ENCODE measurements at regions of chr15 and their contacts with region 1.

Region 1: GRCh38 chr15:73069109-73069508 is 16.8 kb downstream of the NEO1 start:
- DNase-seq: no peak
- H3K4me3 ChIP-seq: no peak overlapping the region
- H3K4me3 Mint-ChIP-seq: no peak overlapping the region
- H3K27ac ChIP-seq: no peak overlapping the region
- H3K27ac Mint-ChIP-seq: no peak overlapping the region
- H3K4me1 ChIP-seq: no peaks in the 10 kb centered on the region
- H3K4me1 Mint-ChIP-seq: peaks cover 0 to 4% (median 0%) of the 10 kb centered on the region in 3 donors
- H3K27me3 ChIP-seq: no peaks in the 10 kb centered on the region
- H3K27me3 Mint-ChIP-seq: peaks cover 8 to 12% of the 10 kb centered on the region in 2 donors

Region 2: GRCh38 chr15:72809329-72809728 is 259.8 kb before region 1 on chr15:
- CTCF ChIA-PET with region 1: no interaction called
- POLR2A ChIA-PET with region 1: no interaction called
- DNase-seq: peak in 3 of 5 donors; percentile 15 to 46 (median 26)
- H3K4me3 ChIP-seq: no peak overlapping the region
- H3K4me3 Mint-ChIP-seq: peak overlapping the region in 5 of 7 donors; percentile 21 to 74 (median 66)
- H3K27ac ChIP-seq: no peak overlapping the region
- H3K27ac Mint-ChIP-seq: peak overlapping the region in 7 of 8 donors; percentile 5 to 84 (median 36)
- H3K4me1 ChIP-seq: peaks cover 16% of the 10 kb centered on the region
- H3K4me1 Mint-ChIP-seq: peaks cover 21 to 28% (median 27%) of the 10 kb centered on the region in 3 donors
- H3K27me3 ChIP-seq: no peaks in the 10 kb centered on the region
- H3K27me3 Mint-ChIP-seq: peaks cover 3 to 5% of the 10 kb centered on the region in 2 donors

Region 3: DNA sequence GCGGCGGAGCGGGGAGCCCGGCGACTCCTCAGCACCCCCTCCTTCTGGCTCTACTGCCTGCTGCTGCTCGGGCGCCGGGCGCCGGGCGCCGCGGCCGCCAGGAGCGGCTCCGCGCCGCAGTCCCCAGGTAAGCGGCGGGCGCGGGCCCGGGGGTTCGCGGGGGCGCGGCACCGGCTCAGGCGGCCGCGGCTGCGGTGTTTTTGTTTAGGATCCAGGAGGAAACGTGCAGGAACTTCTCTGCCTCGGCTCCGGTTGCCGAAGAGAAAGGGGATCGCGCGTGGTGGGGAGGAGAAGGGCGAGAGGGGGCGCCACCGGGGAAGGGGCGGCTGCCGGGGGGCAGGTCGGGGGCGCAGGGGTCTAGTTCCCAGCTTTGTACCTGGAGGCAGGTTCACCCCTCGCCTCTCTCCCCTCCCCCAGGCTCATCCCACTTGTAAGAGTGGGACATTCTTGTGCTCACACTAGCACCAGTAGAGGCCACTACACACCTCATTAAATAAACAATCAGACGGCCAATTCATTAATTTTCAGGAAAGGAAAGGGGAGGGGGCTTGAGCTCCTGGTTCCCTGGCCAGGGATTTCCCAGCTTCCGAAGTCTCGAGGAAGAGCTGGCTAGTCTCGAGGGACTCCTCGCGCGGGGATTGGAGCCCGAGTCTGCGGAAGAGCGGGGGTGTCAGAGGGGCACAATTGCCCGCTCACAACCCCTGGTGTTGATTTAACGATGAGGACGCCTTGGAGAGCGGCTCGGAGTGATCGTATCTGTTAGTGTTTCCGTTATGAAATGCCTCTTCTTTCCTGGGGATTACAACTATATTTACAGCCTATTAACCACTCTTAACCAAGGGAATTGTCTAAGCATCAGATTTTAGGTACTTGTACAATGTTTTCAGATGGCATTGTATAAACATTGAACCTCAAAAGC is 16.2 kb before region 1 on chr15:
- CTCF ChIA-PET with region 1: interaction called, 10 read pairs
- POLR2A ChIA-PET with region 1: no interaction called
- DNase-seq: peak; percentile 22 to 56 (median 27)
- H3K4me3 ChIP-seq: peak overlapping the region; percentile 52
- H3K4me3 Mint-ChIP-seq: peak overlapping the region; percentile 84 to 95 (median 88)
- H3K27ac ChIP-seq: no peak overlapping the region
- H3K27ac Mint-ChIP-seq: peak overlapping the region in 7 of 8 donors; percentile 70 to 94 (median 82)
- H3K4me1 ChIP-seq: peaks cover 7% of the 10 kb centered on the region
- H3K4me1 Mint-ChIP-seq: peaks cover 10 to 16% (median 15%) of the 10 kb centered on the region in 3 donors
- H3K27me3 ChIP-seq: no peaks in the 10 kb centered on the region
- H3K27me3 Mint-ChIP-seq: peaks cover 6 to 19% of the 10 kb centered on the region in 2 donors

Region 4: DNA sequence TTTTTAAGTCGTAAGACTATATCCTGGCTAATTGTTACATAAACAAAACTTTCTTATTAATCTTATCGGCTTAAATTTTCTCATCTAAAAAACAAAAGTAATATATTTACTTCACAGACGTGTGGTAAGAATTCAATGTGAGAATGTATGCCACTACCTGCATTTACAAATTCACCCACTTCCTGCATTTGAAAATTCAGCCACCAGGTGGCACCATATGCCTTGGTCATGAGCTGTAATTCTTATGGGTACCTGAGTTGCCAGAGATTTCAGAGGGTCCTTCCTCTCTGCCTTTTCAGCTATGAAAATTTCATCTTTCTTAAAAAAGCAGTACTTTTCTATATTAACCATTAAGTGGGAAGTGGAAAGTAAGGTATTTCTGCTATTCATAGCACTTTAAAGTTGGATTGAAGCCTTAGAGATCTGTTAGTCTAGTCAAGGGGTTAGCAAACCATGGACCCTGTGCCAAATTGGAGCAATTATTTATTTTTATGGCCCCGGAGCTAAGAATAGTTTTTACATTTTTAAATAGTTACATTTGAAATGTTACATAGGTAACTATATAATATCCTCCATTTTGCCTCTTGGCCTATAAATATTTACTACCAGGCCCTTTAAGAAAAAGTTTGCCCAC is 171.9 kb after region 1 on chr15:
- CTCF ChIA-PET with region 1: no interaction called
- POLR2A ChIA-PET with region 1: no interaction called
- DNase-seq: peak; percentile 43 to 71 (median 52)
- H3K4me3 ChIP-seq: no peak overlapping the region
- H3K4me3 Mint-ChIP-seq: no peak overlapping the region
- H3K27ac ChIP-seq: no peak overlapping the region
- H3K27ac Mint-ChIP-seq: no peak overlapping the region
- H3K4me1 ChIP-seq: no peaks in the 10 kb centered on the region
- H3K4me1 Mint-ChIP-seq: no peaks in the 10 kb centered on the region
- H3K27me3 ChIP-seq: no peaks in the 10 kb centered on the region
- H3K27me3 Mint-ChIP-seq: peaks cover 3% of the 10 kb centered on the region in 2 donors

Measured in CD8-positive, alpha-beta memory T cell (primary cell).